ENCODE measurements at regions of chr19 and their contacts with region 1.

Region 1: GRCh38 chr19:38899447-38900219 is at the starts of genes NFKBIB and SIRT2:
- DNase-seq: peak; percentile 100
- H3K4me3 Mint-ChIP-seq: peak within 1 kb of the TSS; percentile 88
- H3K27ac Mint-ChIP-seq: peak within 1 kb of the TSS; percentile 98
- H3K4me1 Mint-ChIP-seq: peaks cover 27% of the 10 kb centered on the region
- H3K27me3 Mint-ChIP-seq: no peaks in the 10 kb centered on the region
- CTCF ChIP-seq: no peak
- total RNA-seq, gene NFKBIB: 45.1 and 45.4 TPM in 2 replicates
- total RNA-seq, gene SIRT2: 35.5 and 37.4 TPM in 2 replicates

Region 2: DNA sequence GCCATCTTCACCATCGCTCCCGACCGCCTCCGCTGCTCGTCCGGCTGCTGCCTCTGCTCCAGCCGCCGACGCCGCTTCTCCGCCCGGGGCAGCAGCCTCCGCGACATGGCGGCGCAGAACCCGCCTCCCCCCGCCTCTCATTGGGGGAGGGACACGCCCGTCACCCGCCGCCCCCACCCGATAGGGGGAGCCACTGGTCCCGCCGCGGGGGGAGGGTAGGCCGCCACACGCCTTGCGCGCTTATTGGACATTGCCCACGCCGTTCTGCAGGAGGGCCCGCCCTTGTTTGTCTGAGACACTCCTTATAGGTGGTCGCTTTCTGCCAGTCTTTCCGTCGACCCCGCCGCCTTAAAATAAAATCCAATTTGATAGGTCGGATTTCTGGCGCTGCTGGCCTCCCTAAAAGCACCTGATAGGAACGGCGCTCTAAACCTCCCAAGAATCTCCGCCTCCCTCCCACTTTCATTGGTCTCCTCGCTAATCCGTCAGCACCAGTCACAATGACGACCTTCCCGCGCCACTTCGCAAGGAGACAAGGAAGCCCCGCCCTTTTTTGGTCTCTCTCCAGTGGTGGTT is 49.7 kb before region 1 on chr19 and contains the start of gene HNRNPL:
- CTCF ChIA-PET with region 1: no interaction called
- POLR2A ChIA-PET with region 1: interaction called, 40 read pairs
- intact Hi-C with region 1: loop called (anchors 1 kb)
- DNase-seq: peak; percentile 100
- H3K4me3 Mint-ChIP-seq: peak within 1 kb of the TSS; percentile 97
- H3K27ac Mint-ChIP-seq: peak within 1 kb of the TSS; percentile 99
- H3K4me1 Mint-ChIP-seq: peaks cover 18% of the 10 kb centered on the region
- H3K27me3 Mint-ChIP-seq: no peaks in the 10 kb centered on the region
- CTCF ChIP-seq: no peak
- total RNA-seq, gene HNRNPL: 288 and 421 TPM in 2 replicates

Region 3: GRCh38 chr19:39196860-39197822 is 297.5 kb after region 1 on chr19 and contains the start of gene NCCRP1:
- CTCF ChIA-PET with region 1: no interaction called
- POLR2A ChIA-PET with region 1: no interaction called
- intact Hi-C with region 1: no loop called
- DNase-seq: no peak
- H3K4me3 Mint-ChIP-seq: no peak within 1 kb of the TSS
- H3K27ac Mint-ChIP-seq: no peak within 1 kb of the TSS
- H3K4me1 Mint-ChIP-seq: peaks cover 24% of the 10 kb centered on the region
- H3K27me3 Mint-ChIP-seq: peaks cover 48% of the 10 kb centered on the region
- CTCF ChIP-seq: no peak
- total RNA-seq, gene NCCRP1: not detected in 2 replicates